GM10248 (cell line): ENCODE measurements at regions of chr1 and their contacts with region 1.

Region 1: DNA sequence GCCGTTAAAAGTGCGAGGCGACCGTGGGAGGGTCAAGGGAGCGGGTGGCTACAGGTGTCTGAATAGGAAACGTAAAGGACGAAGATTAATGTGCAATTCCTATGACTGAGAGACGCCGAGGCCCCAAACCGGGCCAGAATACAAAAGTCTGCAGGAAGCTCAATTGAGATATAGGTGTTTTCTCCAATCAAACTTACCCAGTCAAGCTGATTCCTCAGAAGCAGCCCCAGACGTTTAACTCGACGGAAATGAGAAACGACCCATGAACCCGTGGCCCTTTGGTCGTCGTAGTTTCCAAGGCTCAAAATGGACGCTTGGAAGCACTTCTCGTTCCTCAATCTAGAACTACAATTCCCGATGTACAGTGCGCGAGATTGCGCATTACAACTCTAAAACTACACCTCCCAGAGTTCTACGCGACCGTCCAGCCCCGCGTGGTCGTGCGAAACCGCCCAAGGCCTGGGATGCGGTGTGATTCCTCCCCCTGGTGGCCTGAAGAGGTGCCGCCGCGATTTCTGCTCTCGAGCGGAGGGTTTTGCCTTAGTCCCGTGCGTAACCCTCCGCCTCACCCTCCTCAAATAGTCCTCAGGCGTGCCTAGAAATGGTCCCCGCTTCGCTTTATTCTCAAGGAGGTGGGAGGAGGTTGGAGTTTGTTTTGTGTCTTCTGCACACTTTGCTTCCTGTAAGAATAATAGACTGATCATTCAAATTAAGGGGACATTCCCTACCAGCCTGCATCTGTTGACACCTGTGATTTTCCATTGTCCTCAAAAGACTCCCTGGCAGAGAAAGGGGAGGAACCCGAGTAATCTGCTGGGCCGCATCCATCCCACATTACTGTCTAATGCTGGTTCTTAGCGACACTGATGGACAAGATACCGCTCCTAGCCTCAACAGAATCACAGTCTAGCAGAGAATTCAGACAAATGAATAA is at the start of gene PAFAH2:
- DNase-seq: peak; percentile 93
- CTCF ChIP-seq: peak; percentile 97

Region 2: GRCh38 chr1:25912076-25912831 is 85.8 kb before region 1 on chr1:
- CTCF ChIA-PET with region 1: interaction called, 14 read pairs
- POLR2A ChIA-PET with region 1: no interaction called
- DNase-seq: no peak
- CTCF ChIP-seq: no peak

Region 3: DNA sequence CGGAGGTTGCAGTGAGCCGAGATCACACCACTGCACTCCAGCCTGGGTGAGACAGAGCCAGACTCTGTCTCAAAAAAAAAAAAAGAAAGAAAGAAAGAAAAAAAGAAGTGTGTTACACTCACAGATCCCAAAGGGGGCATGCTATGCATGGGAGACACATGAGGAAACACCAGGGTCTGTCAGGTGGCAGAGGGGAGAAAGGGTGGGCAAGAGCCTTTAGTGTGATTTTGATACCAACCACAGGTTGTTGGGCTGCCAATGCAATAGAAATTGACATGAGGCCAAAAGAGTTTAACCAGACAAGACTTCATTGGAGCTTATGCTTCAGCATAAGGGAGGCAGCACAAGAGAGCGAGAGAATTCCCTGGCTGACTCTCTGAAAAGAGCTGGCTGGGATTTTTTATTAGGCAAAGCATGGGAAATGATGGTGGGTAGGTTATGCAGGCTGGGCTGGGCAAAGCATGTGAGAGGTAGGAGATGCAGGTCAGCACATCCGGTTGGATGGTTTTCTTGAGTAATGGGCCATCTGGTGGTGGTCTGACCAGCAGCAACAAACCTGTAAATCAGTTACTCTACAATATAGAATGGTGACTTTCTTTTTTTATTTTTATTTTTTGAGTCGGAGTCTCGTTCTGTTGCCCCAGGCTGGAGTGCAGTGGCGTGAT is 11.8 kb after region 1 on chr1:
- CTCF ChIA-PET with region 1: interaction called, 13 read pairs
- POLR2A ChIA-PET with region 1: no interaction called
- DNase-seq: no peak
- CTCF ChIP-seq: no peak

Region 4: DNA sequence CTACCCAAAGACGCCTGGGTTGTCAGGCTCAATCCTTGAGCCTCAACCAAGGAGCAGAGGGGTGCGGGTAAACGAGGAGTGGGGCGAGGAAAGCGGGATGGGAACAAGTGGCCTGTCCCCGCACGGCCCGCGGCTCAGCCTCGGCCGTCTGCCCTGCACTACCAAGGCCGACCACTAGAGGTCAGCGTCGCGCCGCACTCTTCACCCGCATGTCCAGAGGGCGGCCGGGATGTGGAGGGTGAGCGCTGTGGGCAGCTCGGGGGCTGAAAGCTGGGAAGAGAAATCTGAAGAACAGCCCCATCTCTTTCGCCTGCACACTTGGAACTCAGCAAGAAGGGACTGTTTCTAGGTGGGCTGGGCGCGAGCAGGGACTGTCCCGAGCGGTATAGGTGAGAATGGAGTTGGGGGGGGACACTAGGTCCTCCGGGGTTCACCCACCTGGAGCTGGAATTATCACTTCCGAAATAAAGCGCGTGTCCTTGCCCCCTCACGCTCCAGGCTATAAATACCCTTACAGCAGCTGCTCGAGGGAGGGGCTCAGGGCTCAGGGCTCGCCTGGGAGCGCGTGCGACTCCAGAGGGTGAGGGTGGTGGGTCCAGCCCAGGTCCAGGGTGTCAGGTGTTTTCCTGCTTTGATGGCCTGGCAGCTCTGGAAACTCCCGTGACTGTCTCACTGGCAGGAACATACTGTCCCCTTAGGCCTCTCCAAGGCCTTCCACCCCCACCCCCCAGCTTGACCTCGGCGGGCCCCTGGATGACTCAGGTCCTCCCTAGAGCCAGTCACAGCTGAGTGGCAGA is 38.1 kb after region 1 on chr1:
- CTCF ChIA-PET with region 1: interaction called, 21 read pairs
- POLR2A ChIA-PET with region 1: no interaction called
- DNase-seq: peak; percentile 92
- CTCF ChIP-seq: peak; percentile 99

Region 5: GRCh38 chr1:26203642-26204318 is 205.7 kb after region 1 on chr1:
- CTCF ChIA-PET with region 1: no interaction called
- POLR2A ChIA-PET with region 1: no interaction called
- DNase-seq: no peak
- CTCF ChIP-seq: no peak